HEK293 (cell line): ENCODE measurements at regions of chrX and their contacts with region 1.

Region 1: DNA sequence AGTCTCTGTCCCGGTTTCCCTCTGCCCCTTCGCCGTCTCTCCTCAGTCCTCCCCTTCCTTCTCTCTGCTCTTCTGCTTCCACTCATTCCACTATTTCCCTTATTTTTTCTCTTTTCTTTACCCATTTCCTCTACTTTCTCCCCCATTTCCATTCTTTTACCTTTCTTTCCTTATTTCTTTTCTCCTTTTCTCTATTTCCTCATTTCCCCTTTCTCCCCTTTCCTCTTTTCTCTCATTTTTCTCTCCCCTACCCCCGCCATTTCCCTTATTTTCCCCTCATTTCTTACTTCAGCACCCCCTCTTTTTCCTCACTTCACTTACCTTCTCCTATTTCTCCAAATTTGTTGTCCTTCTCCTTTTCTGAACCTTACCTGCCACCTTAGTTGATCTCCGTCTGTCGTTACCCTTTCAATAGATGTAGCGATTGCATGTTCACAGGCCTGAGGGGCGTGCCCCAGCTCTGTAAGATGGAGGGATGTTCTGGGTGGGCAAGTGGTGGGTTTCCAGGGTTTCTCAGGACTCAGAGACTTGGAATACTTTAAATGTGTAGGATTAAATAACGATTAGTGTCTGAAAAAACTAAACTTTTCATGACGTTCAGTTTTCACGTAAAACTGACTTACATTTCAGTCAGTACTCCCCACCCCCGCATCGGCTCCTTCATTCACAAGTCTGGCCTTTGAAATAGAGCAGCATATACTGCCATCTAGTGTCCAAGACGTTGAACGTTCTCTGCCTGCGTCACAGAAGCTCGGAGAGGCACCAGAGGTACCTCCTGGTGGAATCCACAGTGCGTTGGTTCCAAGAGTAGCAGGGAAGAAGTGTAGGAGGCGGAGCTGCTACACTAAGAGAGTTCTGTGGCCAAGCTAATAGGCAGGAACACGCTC is 641 bp upstream of the NCBP2L start:
- H3K4me3 ChIP-seq: no peak overlapping the region
- H3K27ac ChIP-seq: peak overlapping the region; percentile 57
- H3K4me1 ChIP-seq: peaks cover 3% of the 10 kb centered on the region; the same call in 1 of the 2 replicates
- CTCF ChIP-seq: peak; percentile 87

Region 2: GRCh38 chrX:107654872-107655761 is 121.8 kb before region 1 on chrX:
- CTCF ChIA-PET with region 1: interaction called, 155 read pairs
- POLR2A ChIA-PET with region 1: interaction called, 4 read pairs
- H3K4me3 ChIP-seq: no peak overlapping the region
- H3K27ac ChIP-seq: no peak overlapping the region
- H3K4me1 ChIP-seq: no peaks in the 10 kb centered on the region
- CTCF ChIP-seq: peak; percentile 76

Region 3: DNA sequence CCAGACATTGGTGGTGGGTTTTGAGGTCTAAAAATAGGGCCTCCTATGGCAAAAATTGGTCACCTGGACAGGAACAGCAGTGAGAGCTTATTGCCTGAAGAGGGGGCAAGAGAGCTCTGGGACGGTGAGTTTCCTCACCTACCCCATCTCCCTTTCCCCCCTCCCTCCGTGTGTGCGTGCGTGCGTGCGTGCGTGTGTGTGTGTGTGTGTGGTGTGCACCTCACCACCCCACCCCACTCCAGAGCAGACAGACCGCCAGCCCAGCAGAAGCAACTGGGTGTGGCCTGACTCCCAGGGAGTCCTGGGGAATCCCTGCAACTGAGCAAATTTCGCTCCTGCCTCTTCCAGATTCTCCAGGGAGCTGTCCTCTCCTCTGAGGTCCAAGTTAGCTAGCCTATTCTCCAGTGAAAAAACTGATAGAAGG is 103.9 kb before region 1 on chrX:
- CTCF ChIA-PET with region 1: interaction called, 69 read pairs
- POLR2A ChIA-PET with region 1: interaction called, 6 read pairs
- H3K4me3 ChIP-seq: no peak overlapping the region
- H3K27ac ChIP-seq: peak overlapping the region; percentile 32; the same call in 1 of the 2 replicates
- H3K4me1 ChIP-seq: peaks cover 21% of the 10 kb centered on the region
- CTCF ChIP-seq: peak; percentile 77

Region 4: GRCh38 chrX:107731831-107732502 is 44.9 kb before region 1 on chrX:
- CTCF ChIA-PET with region 1: interaction called, 25 read pairs
- POLR2A ChIA-PET with region 1: interaction called, 8 read pairs
- H3K4me3 ChIP-seq: no peak overlapping the region
- H3K27ac ChIP-seq: peak overlapping the region; percentile 70
- H3K4me1 ChIP-seq: peaks cover 27% of the 10 kb centered on the region
- CTCF ChIP-seq: no peak

Region 5: GRCh38 chrX:107766470-107767150 is 10.3 kb before region 1 on chrX:
- CTCF ChIA-PET with region 1: interaction called, 16 read pairs
- POLR2A ChIA-PET with region 1: interaction called, 6 read pairs
- H3K4me3 ChIP-seq: no peak overlapping the region
- H3K27ac ChIP-seq: no peak overlapping the region
- H3K4me1 ChIP-seq: no peaks in the 10 kb centered on the region
- CTCF ChIP-seq: no peak